ENCODE measurements at regions of chr6 and their contacts with region 1.

Region 1: GRCh38 chr6:111642463-111643158 is 36.9 kb upstream of the TRAF3IP2 start:
- DNase-seq: peak in 2 of 4 experiments; percentile 58 to 73
- ATAC-seq: peak; percentile 97
- H3K4me3 ChIP-seq: no peak overlapping the region
- H3K27ac ChIP-seq: no peak overlapping the region
- H3K4me1 ChIP-seq: no peaks in the 10 kb centered on the region
- H3K27me3 ChIP-seq: no peaks in the 10 kb centered on the region
- CTCF ChIP-seq: peak; percentile 77 to 87 (median 83)
- EP300 ChIP-seq: no peak
- POLR2A ChIP-seq: no peak
- RAD21 ChIP-seq: peak; percentile 84 to 91

Region 2: GRCh38 chr6:111057074-111057752 is 585.4 kb before region 1 on chr6:
- CTCF ChIA-PET with region 1: no interaction called
- POLR2A ChIA-PET with region 1: no interaction called
- in situ Hi-C with region 1: loop called (anchors 10 kb)
- intact Hi-C with region 1: no loop called
- DNase-seq: peak; percentile 46 to 61 (median 54)
- ATAC-seq: peak; percentile 92
- H3K4me3 ChIP-seq: no peak overlapping the region
- H3K27ac ChIP-seq: no peak overlapping the region
- H3K4me1 ChIP-seq: no peaks in the 10 kb centered on the region
- H3K27me3 ChIP-seq: no peaks in the 10 kb centered on the region
- CTCF ChIP-seq: peak; percentile 62 to 76 (median 75); a peak in 5 of 6 replicates
- EP300 ChIP-seq: no peak
- POLR2A ChIP-seq: no peak
- RAD21 ChIP-seq: peak; percentile 60 to 76

Region 3: GRCh38 chr6:111361648-111362047 is 281.0 kb before region 1 on chr6:
- CTCF ChIA-PET with region 1: interaction called, 6 read pairs
- POLR2A ChIA-PET with region 1: no interaction called
- in situ Hi-C with region 1: no loop called
- intact Hi-C with region 1: loop called (anchors 1 kb)
- DNase-seq: peak; percentile 20 to 51 (median 28)
- ATAC-seq: peak; percentile 78
- H3K4me3 ChIP-seq: no peak overlapping the region
- H3K27ac ChIP-seq: no peak overlapping the region
- H3K4me1 ChIP-seq: no peaks in the 10 kb centered on the region
- H3K27me3 ChIP-seq: no peaks in the 10 kb centered on the region
- CTCF ChIP-seq: peak; percentile 41 to 56 (median 49)
- EP300 ChIP-seq: no peak
- POLR2A ChIP-seq: no peak
- RAD21 ChIP-seq: peak; percentile 53 to 77

Region 4: DNA sequence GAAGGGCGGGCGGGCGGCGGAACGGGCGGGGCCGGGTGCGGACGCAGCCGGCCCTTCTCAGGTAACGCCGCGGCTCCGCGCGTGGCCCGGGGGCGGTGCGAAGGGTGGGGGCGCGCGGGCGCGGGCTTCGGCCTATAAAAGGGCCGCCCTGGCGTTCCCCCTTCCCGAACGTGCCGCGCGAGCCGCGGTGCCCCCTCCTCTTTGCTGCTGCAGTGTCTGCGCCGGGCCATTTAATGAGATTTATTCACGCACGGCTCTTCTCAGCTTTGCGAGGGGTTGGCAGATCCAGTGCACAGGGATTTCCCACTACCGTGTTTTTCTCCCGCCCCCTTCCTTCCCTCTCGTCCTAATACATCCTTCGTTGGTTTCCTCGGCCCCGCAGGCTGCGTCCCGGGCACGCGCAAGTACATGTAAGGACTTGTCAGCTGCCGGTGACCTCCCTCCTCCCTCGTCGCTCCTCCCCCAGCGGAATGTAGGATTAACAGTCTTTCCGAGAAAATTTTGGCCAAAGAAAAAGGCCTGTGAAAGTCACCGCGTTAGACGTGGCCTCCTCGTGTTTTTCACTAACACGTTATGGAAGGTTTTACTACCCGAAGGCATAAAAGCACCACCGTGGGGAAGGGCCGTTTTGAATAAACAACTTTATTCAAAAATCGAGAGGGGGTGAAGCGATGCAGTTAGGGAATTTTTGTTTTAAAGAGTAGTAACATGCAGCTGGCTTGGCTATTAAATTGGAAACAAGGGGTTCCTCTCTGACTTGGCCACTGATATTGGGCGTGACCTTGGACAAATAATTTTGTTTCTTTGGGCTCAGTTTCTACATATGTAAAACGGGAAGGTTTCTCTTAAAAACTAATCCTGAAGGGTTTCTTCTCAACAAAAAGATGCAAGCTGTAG is 158.6 kb before region 1 on chr6:
- CTCF ChIA-PET with region 1: no interaction called
- POLR2A ChIA-PET with region 1: no interaction called
- in situ Hi-C with region 1: no loop called
- intact Hi-C with region 1: loop called (anchors 2 kb)
- DNase-seq: peak; percentile 82 to 96 (median 88)
- ATAC-seq: peak; percentile 75
- H3K4me3 ChIP-seq: peak overlapping the region; percentile 87
- H3K27ac ChIP-seq: peak overlapping the region; percentile 96
- H3K4me1 ChIP-seq: peaks cover 0 to 9% of the 10 kb centered on the region in 2 experiments; a peak in 3 of 5 replicates
- H3K27me3 ChIP-seq: no peaks in the 10 kb centered on the region
- CTCF ChIP-seq: no peak
- EP300 ChIP-seq: peak; percentile 48
- POLR2A ChIP-seq: peak; percentile 94
- RAD21 ChIP-seq: peak in 1 of 2 experiments; percentile 24; a peak in 1 of 4 replicates

Region 5: DNA sequence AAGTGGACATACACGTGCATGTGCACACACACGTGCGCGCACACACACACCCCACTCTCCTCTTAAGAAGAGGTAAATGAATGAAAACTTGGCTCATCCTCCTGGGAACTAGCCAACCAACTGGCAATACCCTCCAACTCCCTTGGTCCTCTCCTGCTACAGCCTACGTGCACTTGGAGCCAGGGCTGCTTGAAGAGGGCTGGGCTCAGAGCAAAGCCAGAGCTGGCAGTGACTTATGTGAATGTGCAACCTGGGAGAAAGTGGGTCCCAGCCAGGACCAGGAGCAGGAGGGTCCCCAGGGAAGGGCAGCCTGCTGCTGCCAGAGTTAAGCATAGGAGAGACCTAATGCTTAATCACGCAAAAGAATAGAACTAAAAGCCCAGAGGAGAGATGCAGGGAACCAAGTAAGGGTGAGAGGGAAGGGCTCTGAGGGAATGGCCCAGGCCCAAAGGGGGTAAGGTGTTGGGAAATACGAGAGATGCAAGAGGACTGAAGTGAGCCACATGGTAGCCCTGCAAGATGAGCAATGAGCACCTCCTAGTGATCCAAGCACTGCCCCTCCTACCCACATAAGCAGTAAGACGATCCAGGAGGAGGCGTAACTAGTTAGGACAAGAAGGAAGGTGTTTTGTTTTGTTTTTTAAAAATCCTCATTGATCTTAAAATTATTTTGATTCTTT is 61.6 kb before region 1 on chr6:
- CTCF ChIA-PET with region 1: no interaction called
- POLR2A ChIA-PET with region 1: no interaction called
- in situ Hi-C with region 1: no loop called
- intact Hi-C with region 1: loop called (anchors 5 kb)
- DNase-seq: no peak
- ATAC-seq: peak; percentile 82
- H3K4me3 ChIP-seq: no peak overlapping the region
- H3K27ac ChIP-seq: no peak overlapping the region
- H3K4me1 ChIP-seq: peaks cover 0 to 10% of the 10 kb centered on the region in 2 experiments; a peak in 2 of 5 replicates
- H3K27me3 ChIP-seq: no peaks in the 10 kb centered on the region
- CTCF ChIP-seq: peak; percentile 29 to 78 (median 64); a peak in 4 of 6 replicates
- EP300 ChIP-seq: no peak
- POLR2A ChIP-seq: no peak
- RAD21 ChIP-seq: peak; percentile 33 to 66; a peak in 3 of 4 replicates

Region 6: GRCh38 chr6:111601886-111602285 is 40.7 kb before region 1 on chr6:
- CTCF ChIA-PET with region 1: no interaction called
- POLR2A ChIA-PET with region 1: no interaction called
- in situ Hi-C with region 1: no loop called
- intact Hi-C with region 1: no loop called
- DNase-seq: no peak
- ATAC-seq: no peak
- H3K4me3 ChIP-seq: no peak overlapping the region
- H3K27ac ChIP-seq: no peak overlapping the region
- H3K4me1 ChIP-seq: peaks cover 26 to 31% of the 10 kb centered on the region in 2 experiments
- H3K27me3 ChIP-seq: no peaks in the 10 kb centered on the region
- CTCF ChIP-seq: no peak
- EP300 ChIP-seq: no peak
- POLR2A ChIP-seq: no peak
- RAD21 ChIP-seq: no peak

Region 7: GRCh38 chr6:111663692-111664564 is 21.3 kb after region 1 on chr6:
- CTCF ChIA-PET with region 1: no interaction called
- POLR2A ChIA-PET with region 1: no interaction called
- in situ Hi-C with region 1: no loop called
- intact Hi-C with region 1: no loop called
- DNase-seq: peak; percentile 25 to 40 (median 28)
- ATAC-seq: peak; percentile 54
- H3K4me3 ChIP-seq: no peak overlapping the region
- H3K27ac ChIP-seq: no peak overlapping the region
- H3K4me1 ChIP-seq: peaks cover 13 to 14% of the 10 kb centered on the region in 2 experiments
- H3K27me3 ChIP-seq: peaks cover 9 to 38% of the 10 kb centered on the region in 2 experiments; a peak in 3 of 5 replicates
- CTCF ChIP-seq: no peak
- EP300 ChIP-seq: no peak
- POLR2A ChIP-seq: no peak
- RAD21 ChIP-seq: no peak

Region 8: GRCh38 chr6:111823831-111824607 is 181.4 kb after region 1 on chr6:
- CTCF ChIA-PET with region 1: no interaction called
- POLR2A ChIA-PET with region 1: no interaction called
- in situ Hi-C with region 1: no loop called
- intact Hi-C with region 1: no loop called
- DNase-seq: no peak
- ATAC-seq: no peak; the same call in 2 of the 3 replicates
- H3K4me3 ChIP-seq: no peak overlapping the region
- H3K27ac ChIP-seq: no peak overlapping the region
- H3K4me1 ChIP-seq: peaks cover 0 to 3% of the 10 kb centered on the region in 2 experiments; a peak in 1 of 5 replicates
- H3K27me3 ChIP-seq: peaks cover 0 to 14% of the 10 kb centered on the region in 2 experiments; a peak in 4 of 5 replicates
- CTCF ChIP-seq: no peak
- EP300 ChIP-seq: no peak
- POLR2A ChIP-seq: no peak
- RAD21 ChIP-seq: no peak

Measured in K562 (cell line).